WTC11 (cell line): ENCODE measurements at regions of chr3 and their contacts with region 1.

Region 1: DNA sequence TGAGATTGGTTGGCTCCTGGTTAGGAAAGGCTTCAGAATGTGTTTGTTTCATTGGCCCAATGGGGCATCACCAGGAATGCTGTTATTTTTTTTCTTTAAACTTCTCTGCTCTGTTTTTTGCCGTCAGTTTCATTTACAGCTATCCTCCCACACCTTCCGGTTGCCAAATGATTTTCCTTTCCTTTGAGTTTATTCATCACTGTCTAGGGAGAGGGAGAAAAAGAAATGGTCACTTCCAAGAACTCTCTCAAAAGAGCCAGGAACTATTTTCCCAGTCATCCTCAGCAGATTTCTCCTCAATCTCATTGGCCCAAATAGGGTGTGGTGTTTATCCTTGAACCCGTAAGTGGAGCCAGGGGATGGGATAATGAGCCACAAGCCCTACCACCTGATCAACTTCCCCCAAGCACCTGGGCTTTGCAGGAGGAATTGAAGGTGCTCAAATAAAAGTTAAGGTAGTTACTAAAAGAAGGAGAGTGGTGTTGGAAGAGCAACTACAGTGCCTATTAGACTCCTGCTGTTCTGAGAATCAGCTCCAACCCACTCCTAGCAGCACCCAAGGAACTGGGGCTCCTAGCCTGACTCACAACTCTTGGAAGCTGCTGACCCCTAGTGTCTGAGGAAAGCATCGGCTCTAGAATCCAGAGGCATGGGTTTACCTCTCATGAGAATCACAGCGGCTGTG is 183.8 kb upstream of the IL12A start:
- DNase-seq: peak; percentile 70
- ATAC-seq: peak; percentile 100
- H3K4me3 Mint-ChIP-seq: no peak overlapping the region
- H3K27ac Mint-ChIP-seq: no peak overlapping the region
- H3K4me1 Mint-ChIP-seq: peaks cover 6% of the 10 kb centered on the region
- H3K27me3 Mint-ChIP-seq: peaks cover 41% of the 10 kb centered on the region
- CTCF ChIP-seq: peak; percentile 48

Region 2: GRCh38 chr3:159260049-159260662 is 544.7 kb before region 1 on chr3:
- CTCF ChIA-PET with region 1: interaction called, 24 read pairs
- POLR2A ChIA-PET with region 1: no interaction called
- DNase-seq: peak; percentile 31
- ATAC-seq: peak; percentile 71
- H3K4me3 Mint-ChIP-seq: no peak overlapping the region
- H3K27ac Mint-ChIP-seq: no peak overlapping the region
- H3K4me1 Mint-ChIP-seq: no peaks in the 10 kb centered on the region
- H3K27me3 Mint-ChIP-seq: no peaks in the 10 kb centered on the region; the same call in 1 of the 2 replicates
- CTCF ChIP-seq: peak; percentile 57

Region 3: DNA sequence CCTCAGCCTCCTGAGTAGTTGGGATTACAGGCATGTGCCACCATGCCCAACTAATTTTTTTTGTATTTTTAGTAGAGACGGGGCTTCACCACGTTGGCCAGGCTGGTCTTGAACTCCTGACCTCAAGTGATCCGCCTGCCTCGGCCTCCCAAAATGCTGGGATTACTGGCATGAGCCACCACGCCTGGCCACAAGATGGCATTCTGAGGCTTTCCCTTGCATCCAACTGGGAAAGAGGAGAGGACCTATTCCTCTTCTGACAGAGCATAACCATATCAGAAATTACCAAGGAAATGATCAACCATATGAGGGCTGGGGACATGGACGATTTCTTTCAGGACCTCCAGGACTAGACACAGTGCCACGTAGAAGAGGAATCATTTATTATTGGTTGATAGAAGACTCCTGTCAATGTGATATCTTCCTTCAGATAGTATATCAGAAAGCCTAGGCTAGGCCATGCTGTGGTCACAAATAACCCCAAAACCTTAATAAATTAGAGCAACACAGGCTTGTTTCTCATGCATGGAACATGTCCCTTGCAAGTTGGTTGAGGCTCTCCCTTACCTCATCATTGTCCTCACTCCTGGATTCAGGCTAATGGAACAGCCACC is 188.5 kb before region 1 on chr3:
- CTCF ChIA-PET with region 1: interaction called, 16 read pairs
- POLR2A ChIA-PET with region 1: no interaction called
- DNase-seq: peak; percentile 59
- ATAC-seq: peak; percentile 71
- H3K4me3 Mint-ChIP-seq: no peak overlapping the region
- H3K27ac Mint-ChIP-seq: no peak overlapping the region
- H3K4me1 Mint-ChIP-seq: peaks cover 26% of the 10 kb centered on the region
- H3K27me3 Mint-ChIP-seq: no peaks in the 10 kb centered on the region
- CTCF ChIP-seq: peak; percentile 46; the same call in 1 of the 2 replicates

Region 4: DNA sequence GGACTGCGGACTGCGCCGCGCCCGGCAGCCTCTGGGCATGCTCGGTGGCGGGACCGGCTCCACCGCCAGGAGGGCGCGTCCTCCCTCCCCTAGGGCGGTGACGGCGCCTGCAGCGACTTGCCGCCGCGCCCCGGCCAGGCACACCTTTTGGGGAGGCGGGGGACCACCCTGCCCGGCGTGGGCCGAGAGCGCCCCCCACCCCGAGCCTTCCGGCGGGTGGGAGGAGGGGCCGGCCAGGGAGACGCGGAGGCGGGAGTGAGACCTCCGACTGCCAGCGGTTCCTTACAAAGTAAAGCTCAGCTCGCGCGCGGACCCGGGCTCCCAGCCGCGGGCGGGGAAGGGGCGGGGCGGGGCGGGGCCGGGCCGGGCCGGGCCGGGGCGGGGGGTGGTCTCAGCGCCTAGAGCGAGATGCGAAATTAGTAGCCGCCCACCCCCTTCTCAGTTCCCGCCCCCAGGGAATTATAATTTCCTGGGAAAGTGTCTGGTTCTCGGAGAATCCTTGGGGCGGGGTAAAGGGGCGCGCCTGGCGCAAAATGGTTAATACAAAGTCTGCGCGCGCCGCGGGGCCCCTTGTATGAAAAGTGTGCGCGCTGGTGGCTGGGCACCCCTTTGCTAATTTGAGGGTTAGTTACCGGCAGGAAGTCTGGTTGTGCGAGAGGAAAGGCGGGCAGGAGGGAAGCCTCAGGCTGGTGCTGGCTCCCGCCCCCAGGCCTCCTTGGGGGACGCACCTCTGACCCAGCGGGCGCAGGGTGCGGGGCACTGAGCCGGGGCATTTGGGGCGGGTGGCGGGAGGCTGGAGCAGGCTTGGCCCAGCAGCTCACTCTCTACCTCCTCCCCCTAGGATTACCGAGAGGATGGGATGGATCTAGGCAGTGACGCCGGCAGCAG is 41.0 kb before region 1 on chr3:
- CTCF ChIA-PET with region 1: interaction called, 37 read pairs
- POLR2A ChIA-PET with region 1: no interaction called
- DNase-seq: peak; percentile 81
- ATAC-seq: peak; percentile 58
- H3K4me3 Mint-ChIP-seq: peak overlapping the region; percentile 97
- H3K27ac Mint-ChIP-seq: peak overlapping the region; percentile 92; the same call in 1 of the 2 replicates
- H3K4me1 Mint-ChIP-seq: peaks cover 41% of the 10 kb centered on the region
- H3K27me3 Mint-ChIP-seq: peaks cover 17% of the 10 kb centered on the region
- CTCF ChIP-seq: no peak

Region 5: DNA sequence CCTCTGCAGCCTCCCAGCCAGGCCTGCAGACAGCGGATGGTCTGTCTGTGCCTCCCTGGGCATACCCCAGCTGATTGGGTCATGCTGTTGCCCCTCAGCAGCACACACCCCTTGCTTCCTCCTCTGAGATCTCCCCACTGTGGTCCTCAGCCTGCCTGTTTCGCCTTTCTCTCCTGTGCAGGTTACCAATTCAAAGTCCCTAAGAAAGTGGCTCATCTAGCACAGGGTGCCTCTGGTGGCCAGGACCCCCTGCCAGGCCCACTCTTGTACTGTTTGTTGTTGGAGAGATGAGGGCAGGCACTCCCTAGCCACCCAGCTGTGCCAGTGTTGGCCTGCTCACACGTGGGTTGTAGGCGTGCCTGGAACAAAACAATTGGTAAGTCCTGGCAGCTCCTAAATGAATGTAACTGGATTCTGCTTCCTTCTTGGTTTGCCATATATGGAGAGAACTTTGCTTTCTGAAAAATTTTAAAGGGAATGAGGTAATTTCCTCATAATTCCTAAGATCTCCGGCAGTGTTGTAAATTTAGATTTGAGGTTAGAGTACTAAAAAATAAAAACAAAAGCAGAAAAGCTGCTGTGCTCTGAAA is 29.4 kb before region 1 on chr3:
- CTCF ChIA-PET with region 1: interaction called, 16 read pairs
- POLR2A ChIA-PET with region 1: interaction called, 4 read pairs
- DNase-seq: peak; percentile 44
- ATAC-seq: peak; percentile 99
- H3K4me3 Mint-ChIP-seq: no peak overlapping the region; the same call in 1 of the 2 replicates
- H3K27ac Mint-ChIP-seq: peak overlapping the region; percentile 89
- H3K4me1 Mint-ChIP-seq: peaks cover 22% of the 10 kb centered on the region
- H3K27me3 Mint-ChIP-seq: no peaks in the 10 kb centered on the region
- CTCF ChIP-seq: no peak

Region 6: DNA sequence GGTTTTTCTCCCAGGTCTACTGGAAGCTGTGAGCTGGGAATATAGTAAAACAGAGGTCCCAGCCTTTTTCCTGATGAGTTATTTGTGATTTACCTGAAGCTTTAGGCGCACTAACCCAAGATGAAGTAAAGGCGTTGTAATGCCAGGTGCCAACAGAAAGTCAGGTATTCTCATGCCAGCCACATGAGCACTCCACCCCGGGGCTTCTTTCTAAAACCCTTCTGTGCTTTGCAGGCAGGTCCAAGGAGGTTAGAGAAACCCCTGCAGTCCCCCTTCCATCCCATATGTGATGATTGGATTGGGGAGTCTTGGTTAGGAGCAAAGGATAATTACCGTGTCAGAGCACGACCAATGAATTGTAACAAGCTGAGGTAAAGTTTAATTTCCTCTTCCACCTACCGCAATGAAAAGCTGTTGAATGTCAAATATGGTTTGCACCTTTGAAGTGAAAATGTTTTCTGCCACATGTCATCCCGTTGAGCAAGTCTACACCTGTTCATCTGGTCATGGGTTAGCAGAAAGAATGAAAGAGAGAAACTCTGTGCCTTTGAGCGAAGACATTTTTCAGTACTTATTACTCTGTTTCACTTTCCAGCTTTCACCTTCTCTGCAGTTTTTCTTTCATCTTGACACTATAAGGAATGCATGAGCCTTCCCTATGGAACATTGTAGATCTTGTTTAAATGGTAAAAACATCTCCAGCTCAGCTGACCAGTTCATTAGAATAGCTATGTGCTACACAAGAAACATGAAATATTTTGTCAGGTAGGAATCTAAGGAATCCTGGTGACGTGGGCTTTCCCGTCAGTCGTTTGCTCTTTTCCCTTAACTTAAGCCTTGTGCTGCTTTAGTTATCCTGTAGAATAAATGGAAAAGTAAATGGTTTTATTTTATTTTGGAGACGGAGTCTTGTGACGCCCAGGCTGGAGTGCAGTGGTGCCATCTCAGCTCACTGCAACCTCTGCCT is 20.8 kb before region 1 on chr3:
- CTCF ChIA-PET with region 1: interaction called, 32 read pairs
- POLR2A ChIA-PET with region 1: interaction called, 4 read pairs
- DNase-seq: no peak
- ATAC-seq: no peak; the same call in 1 of the 2 replicates
- H3K4me3 Mint-ChIP-seq: no peak overlapping the region
- H3K27ac Mint-ChIP-seq: peak overlapping the region; percentile 73; the same call in 1 of the 2 replicates
- H3K4me1 Mint-ChIP-seq: peaks cover 35% of the 10 kb centered on the region
- H3K27me3 Mint-ChIP-seq: no peaks in the 10 kb centered on the region
- CTCF ChIP-seq: no peak